IMR-90 (cell line): ENCODE measurements at regions of chr5 and their contacts with region 1.

Region 1: GRCh38 chr5:109329333-109330237 is 80.2 kb downstream of the PJA2 start:
- DNase-seq: peak; percentile 93
- ATAC-seq: peak; percentile 90
- H3K4me3 ChIP-seq: no peak overlapping the region
- H3K27ac ChIP-seq: no peak overlapping the region
- H3K4me1 ChIP-seq: peaks cover 1% of the 10 kb centered on the region; the same call in 1 of the 2 replicates
- H3K27me3 ChIP-seq: no peaks in the 10 kb centered on the region
- CTCF ChIP-seq: no peak
- POLR2A ChIP-seq: no peak
- RAD21 ChIP-seq: no peak

Region 2: GRCh38 chr5:108681079-108681921 is 648.3 kb before region 1 on chr5:
- CTCF ChIA-PET with region 1: no interaction called
- POLR2A ChIA-PET with region 1: no interaction called
- dilution Hi-C with region 1: no loop called
- in situ Hi-C with region 1: no loop called
- intact Hi-C with region 1: loop called (anchors 5 kb)
- DNase-seq: peak; percentile 78
- ATAC-seq: peak; percentile 95
- H3K4me3 ChIP-seq: no peak overlapping the region
- H3K27ac ChIP-seq: no peak overlapping the region
- H3K4me1 ChIP-seq: no peaks in the 10 kb centered on the region
- H3K27me3 ChIP-seq: peaks cover 7% of the 10 kb centered on the region
- CTCF ChIP-seq: peak; percentile 89
- POLR2A ChIP-seq: no peak
- RAD21 ChIP-seq: peak; percentile 88